ENCODE measurements at regions of chr16 and their contacts with region 1.

Region 1: GRCh38 chr16:87391950-87392822 is at the start of gene MAP1LC3B:
- DNase-seq: peak; percentile 98
- H3K4me3 ChIP-seq: peak within 1 kb of the TSS; percentile 78 to 79
- H3K27ac ChIP-seq: peak within 1 kb of the TSS; percentile 74 to 93
- H3K4me1 ChIP-seq: peaks cover 19 to 27% of the 10 kb centered on the region in 2 experiments
- H3K27me3 ChIP-seq: no peaks in the 10 kb centered on the region
- CTCF ChIP-seq: no peak
- EP300 ChIP-seq: no peak
- RAD21 ChIP-seq: no peak
- polyA plus RNA-seq, gene MAP1LC3B: 33.7 and 36.9 TPM in 2 replicates

Region 2: GRCh38 chr16:87424260-87424659 is 32.1 kb after region 1 on chr16:
- CTCF ChIA-PET with region 1: no interaction called
- POLR2A ChIA-PET with region 1: no interaction called
- DNase-seq: no peak
- H3K4me3 ChIP-seq: no peak overlapping the region
- H3K27ac ChIP-seq: no peak overlapping the region
- H3K4me1 ChIP-seq: peaks cover 0 to 3% of the 10 kb centered on the region in 2 experiments; a peak in 1 of 4 replicates
- H3K27me3 ChIP-seq: no peaks in the 10 kb centered on the region
- CTCF ChIP-seq: no peak
- EP300 ChIP-seq: no peak
- RAD21 ChIP-seq: no peak

Region 3: DNA sequence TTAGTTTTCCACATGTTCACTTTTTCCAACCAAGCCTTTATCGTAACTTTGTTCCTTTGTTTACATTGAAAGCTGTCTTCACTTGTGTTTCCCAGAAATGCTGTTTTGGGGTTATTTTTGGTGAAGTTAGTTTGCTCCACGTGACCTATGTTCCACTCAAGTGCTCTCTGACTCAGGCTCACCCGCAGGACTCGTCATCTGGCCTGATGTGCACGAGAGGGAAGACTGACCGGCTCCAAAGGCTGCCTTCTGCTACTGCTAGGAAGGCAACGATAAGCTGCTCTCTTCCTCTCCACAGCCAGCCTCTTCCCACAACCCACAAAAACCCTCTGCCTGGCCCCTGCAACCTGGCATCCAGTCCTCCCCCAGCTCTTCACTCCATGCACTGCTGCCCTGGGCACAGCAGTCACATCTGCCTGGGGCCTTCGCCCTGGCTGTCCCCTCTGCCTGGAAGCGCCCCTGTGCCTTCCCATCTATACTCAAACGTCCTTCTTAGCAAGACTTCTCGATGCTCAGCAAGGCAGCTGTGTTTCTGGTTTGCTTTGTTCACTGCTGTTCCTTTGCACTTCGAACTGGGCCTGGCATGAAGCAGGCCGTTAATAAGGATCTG is 72.6 kb after region 1 on chr16:
- CTCF ChIA-PET with region 1: interaction called, 10 read pairs
- POLR2A ChIA-PET with region 1: no interaction called
- DNase-seq: peak; percentile 58
- H3K4me3 ChIP-seq: peak overlapping the region in 1 of 2 experiments; percentile 38; a peak in 2 of 4 replicates
- H3K27ac ChIP-seq: peak overlapping the region; percentile 92 to 95
- H3K4me1 ChIP-seq: peaks cover 40 to 71% of the 10 kb centered on the region in 2 experiments
- H3K27me3 ChIP-seq: no peaks in the 10 kb centered on the region
- CTCF ChIP-seq: no peak
- EP300 ChIP-seq: no peak; a peak in 1 of 4 replicates
- RAD21 ChIP-seq: no peak

Region 4: GRCh38 chr16:87914812-87915211 is 522.6 kb after region 1 on chr16:
- CTCF ChIA-PET with region 1: no interaction called
- POLR2A ChIA-PET with region 1: no interaction called
- DNase-seq: no peak
- H3K4me3 ChIP-seq: no peak overlapping the region
- H3K27ac ChIP-seq: no peak overlapping the region
- H3K4me1 ChIP-seq: peaks cover 0 to 5% of the 10 kb centered on the region in 2 experiments; a peak in 1 of 4 replicates
- H3K27me3 ChIP-seq: no peaks in the 10 kb centered on the region
- CTCF ChIP-seq: no peak
- EP300 ChIP-seq: no peak
- RAD21 ChIP-seq: no peak

Measured in SK-N-SH (cell line).